ENCODE measurements at regions of chr9 and their contacts with region 1.

Region 1: DNA sequence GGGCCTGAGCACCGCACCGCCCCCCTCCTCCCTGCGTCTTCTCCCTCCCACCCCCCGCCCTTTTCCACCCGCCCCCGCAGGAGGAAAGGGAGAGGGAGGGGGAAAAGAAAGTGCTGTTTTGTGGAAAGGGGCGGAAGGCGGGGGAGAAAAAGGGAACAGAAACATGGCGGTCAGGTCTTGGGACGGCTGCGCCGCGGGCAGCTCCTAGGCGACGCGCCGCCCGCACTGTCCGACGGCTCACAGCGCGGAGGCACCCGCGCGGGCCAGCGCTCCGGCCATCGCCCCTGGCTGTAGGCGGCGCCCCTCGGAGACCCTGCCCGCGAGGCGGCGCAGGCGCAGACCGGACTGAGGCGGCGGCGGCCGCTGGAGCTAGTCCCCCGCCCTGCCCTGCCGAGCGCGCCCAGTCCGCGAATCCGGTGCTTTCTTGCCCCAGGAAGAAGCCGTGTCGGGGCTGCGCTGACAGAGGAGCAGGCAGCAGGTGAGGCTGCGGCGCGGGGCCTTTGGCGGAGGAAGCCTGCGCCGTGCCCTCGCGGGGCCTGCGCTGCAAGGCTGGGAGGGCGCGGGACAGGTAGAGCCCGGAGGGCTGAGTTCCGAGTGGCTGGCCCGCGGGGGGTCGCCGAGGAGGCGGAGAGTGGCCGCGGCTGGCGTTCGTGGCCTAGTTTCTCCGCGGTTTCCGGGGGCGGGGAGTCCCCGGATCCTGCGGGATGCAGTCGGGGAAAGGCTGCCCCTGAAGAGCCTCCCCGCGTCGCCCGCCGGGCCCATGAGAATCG is at the start of gene DENND4C:
- DNase-seq: peak; percentile 69 to 88 (median 80)
- H3K4me3 ChIP-seq: peak within 1 kb of the TSS; percentile 78
- H3K4me3 Mint-ChIP-seq: peak within 1 kb of the TSS in 2 of 7 donors; percentile 87 to 93
- H3K27ac ChIP-seq: peak within 1 kb of the TSS; percentile 79
- H3K27ac Mint-ChIP-seq: peak within 1 kb of the TSS in 6 of 8 donors; percentile 81 to 93 (median 86)
- H3K4me1 ChIP-seq: peaks cover 16% of the 10 kb centered on the region
- H3K4me1 Mint-ChIP-seq: peaks cover 15 to 24% (median 15%) of the 10 kb centered on the region in 3 donors
- H3K27me3 ChIP-seq: no peaks in the 10 kb centered on the region
- H3K27me3 Mint-ChIP-seq: no peaks in the 10 kb centered on the region
- total RNA-seq, gene DENND4C: 19.8 to 20.0 TPM

Region 2: DNA sequence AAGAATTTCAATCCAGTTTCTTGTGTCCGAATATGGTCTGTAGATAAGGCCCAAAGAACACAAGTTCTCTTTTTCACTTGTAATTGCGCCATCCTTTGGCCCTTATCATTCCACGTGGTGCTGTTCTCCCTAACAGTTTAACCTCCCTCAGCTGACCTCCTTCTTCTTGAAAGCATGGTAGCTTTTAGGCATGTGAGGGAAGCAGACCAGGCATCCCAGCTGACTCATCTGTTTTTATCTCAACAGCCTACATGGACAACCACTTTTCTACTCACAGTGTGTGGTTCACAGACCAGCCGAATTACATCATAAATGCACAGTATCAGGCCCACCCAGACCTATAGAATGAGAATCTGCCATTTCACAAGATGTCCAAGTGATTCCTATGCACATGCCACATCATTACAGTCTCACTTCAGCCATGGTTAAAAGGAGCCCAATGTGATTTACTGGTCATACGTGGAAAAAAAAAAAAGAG is 76.4 kb before region 1 on chr9:
- CTCF ChIA-PET with region 1: no interaction called
- POLR2A ChIA-PET with region 1: no interaction called
- DNase-seq: no peak
- H3K4me3 ChIP-seq: no peak overlapping the region
- H3K4me3 Mint-ChIP-seq: no peak overlapping the region
- H3K27ac ChIP-seq: no peak overlapping the region
- H3K27ac Mint-ChIP-seq: no peak overlapping the region
- H3K4me1 ChIP-seq: no peaks in the 10 kb centered on the region
- H3K4me1 Mint-ChIP-seq: peaks cover 4 to 12% (median 11%) of the 10 kb centered on the region in 3 donors
- H3K27me3 ChIP-seq: no peaks in the 10 kb centered on the region
- H3K27me3 Mint-ChIP-seq: no peaks in the 10 kb centered on the region

Region 3: DNA sequence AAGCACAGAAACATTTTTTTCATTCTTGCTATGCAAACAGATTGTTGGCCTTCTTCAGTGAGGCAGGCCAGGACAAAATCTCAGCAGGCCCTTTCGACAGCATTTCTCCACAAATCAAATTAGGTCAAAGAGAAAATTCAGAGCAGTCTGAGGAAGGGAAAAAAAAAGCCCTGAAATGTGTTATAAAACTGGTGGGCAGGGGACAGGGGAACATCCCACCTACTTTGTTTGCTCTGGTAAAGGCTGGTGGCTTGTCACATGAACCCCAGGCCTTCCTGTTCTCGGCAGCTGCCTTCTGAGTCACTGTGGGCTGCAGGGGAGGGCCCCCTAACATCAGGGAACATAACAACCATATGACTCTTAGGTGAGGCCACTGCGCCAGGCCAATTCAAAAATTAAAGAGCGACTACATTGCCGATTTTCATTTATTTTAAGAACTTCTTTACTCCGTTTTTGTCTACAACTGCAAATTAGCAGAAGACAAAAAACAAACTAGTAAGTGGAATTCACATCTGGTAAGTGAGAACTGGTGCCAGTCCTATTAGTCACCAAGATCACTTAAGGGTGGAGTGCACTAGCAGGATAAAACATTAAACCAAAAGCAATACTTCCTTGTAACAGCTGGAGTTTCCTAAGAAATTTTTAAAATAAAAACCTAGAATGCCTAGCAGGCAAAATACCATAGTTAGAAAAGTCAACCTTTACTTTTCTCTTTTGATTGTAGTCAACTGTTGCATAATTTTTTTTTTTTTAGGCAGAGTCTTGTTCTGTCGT is 46.2 kb before region 1 on chr9:
- CTCF ChIA-PET with region 1: interaction called, 4 read pairs
- POLR2A ChIA-PET with region 1: interaction called, 12 read pairs
- DNase-seq: peak; percentile 68 to 91 (median 79)
- H3K4me3 ChIP-seq: no peak overlapping the region
- H3K4me3 Mint-ChIP-seq: peak overlapping the region; percentile 4 to 90 (median 73)
- H3K27ac ChIP-seq: peak overlapping the region; percentile 60
- H3K27ac Mint-ChIP-seq: peak overlapping the region; percentile 92 to 100 (median 96)
- H3K4me1 ChIP-seq: peaks cover 25% of the 10 kb centered on the region
- H3K4me1 Mint-ChIP-seq: peaks cover 30 to 38% (median 31%) of the 10 kb centered on the region in 3 donors
- H3K27me3 ChIP-seq: no peaks in the 10 kb centered on the region
- H3K27me3 Mint-ChIP-seq: no peaks in the 10 kb centered on the region